Cardiac septum (tissue), 1 donor: ENCODE measurements at regions of chr2 and their contacts with region 1.

Region 1: GRCh38 chr2:57516698-57517340 is 529.8 kb upstream of the VRK2 start:
- DNase-seq: no peak

Region 2: DNA sequence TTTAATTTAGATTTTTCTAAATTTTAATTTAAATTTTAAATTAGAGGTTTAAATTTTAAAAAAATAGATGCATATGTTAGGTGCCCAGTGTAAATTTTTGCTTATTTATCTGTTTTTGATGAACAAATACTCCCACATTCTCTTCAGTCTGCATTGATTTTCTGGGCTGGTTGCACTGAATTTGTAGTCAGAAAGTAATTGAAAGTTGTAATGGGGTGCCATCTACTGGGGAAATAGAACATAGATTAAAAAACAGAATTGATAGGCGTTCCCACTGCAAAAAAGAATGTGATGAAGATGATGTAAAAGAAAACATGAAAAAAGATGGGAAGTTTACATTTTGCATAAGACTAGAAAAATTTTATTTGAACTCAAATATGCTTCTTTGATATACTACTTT is 1384.7 kb before region 1 on chr2:
- intact Hi-C with region 1: loop called (anchors 10 kb)
- DNase-seq: no peak

Region 3: DNA sequence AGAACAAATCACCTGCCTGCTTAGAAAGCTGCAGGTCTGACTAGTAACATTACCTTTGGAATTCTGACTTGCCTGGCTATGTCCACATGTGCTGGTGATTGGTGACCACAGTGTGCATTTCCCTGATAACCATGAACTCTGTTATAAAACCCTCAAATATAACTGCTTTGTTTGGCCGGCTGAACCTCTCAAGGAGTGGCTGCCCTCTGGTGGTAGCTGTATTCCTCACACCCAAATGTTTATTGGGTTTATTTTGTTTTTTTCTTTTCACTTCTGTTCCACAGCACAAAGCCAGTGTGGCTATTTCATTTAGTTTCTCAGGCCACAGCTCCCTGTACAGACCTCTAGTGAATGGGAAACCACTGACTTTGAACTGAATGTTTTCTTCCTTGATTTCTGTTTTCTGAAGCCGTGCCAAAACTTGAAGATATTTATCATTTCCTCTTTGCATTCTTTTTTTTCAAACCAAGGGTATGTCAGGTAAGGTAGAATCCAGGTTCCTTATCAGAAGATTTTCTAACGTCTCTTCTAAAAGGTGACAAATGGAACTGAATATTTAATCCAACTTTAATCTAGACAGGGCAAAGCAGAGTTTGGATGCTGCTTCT is 19.2 kb before region 1 on chr2:
- intact Hi-C with region 1: no loop called
- DNase-seq: no peak